K562 (cell line): ENCODE measurements at regions of chr6 and their contacts with region 1.

Region 1: DNA sequence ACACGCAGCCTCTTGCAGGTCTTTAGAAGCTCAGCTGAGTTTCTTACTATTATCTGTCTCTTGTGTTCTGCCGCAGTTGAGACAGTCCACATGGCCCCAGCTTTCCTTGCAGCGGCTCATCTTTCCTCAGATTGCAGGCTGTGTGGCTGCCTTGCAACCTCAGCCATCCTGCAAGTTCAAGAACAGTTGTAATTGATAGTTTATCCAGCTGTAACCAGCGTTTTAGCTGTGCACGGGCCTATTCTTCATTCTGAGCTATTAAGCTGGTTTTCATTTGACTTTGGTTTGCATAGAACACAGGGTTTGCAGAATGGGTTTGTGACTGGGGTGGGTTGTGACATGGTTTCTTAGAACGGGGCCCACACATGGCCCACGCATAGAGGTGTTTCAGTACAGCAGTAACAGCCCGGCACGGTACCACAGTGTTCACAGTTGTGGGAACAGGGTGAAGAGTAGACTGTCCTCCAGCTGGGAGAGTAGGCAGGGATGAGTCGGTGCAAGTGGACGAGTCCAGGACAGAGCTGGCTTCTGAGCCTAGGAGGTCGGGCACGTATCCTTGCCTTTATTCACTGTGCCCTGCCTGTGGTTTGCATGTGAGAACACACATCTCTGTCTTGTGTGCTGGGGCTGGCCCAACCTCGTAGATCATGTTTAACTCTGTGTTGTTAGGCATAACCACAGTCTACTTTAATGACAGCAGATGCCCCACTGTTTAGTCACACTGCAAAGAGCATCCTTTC is 89.2 kb downstream of the RPP40 start:
- DNase-seq: no peak
- ATAC-seq: no peak
- H3K4me3 ChIP-seq: no peak overlapping the region
- H3K27ac ChIP-seq: no peak overlapping the region
- H3K4me1 ChIP-seq: peaks cover 20 to 36% of the 10 kb centered on the region in 2 experiments; a peak in 4 of 5 replicates
- H3K27me3 ChIP-seq: no peaks in the 10 kb centered on the region
- CTCF ChIP-seq: no peak
- EP300 ChIP-seq: no peak
- POLR2A ChIP-seq: no peak
- RAD21 ChIP-seq: no peak

Region 2: DNA sequence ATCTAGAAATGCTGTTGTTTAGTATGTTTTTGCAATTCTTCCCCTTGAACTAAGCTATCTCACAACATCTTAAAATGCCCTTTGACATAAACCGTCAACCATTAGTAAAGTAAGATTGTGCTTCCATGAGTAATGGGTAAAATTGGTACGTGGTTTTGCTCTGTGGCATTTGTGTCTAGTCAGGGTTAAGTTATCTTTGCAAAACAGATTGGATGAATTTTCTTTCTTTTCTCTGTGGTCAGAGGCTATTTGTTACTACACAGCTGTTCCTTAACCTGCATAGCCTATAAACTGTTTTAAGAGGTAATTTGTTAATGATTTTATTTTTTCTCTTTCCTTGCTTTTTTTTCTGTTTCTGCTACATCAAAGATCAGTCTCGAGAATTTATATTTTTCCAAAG is 13.8 kb after region 1 on chr6:
- CTCF ChIA-PET with region 1: no interaction called
- POLR2A ChIA-PET with region 1: interaction called, 10 read pairs
- in situ Hi-C with region 1: no loop called
- intact Hi-C with region 1: no loop called
- DNase-seq: peak; percentile 70 to 82 (median 78)
- ATAC-seq: peak; percentile 91
- H3K4me3 ChIP-seq: no peak overlapping the region
- H3K27ac ChIP-seq: peak overlapping the region; percentile 39; the same call in 1 of the 3 replicates
- H3K4me1 ChIP-seq: peaks cover 9 to 34% of the 10 kb centered on the region in 2 experiments
- H3K27me3 ChIP-seq: no peaks in the 10 kb centered on the region
- CTCF ChIP-seq: no peak
- EP300 ChIP-seq: peak; percentile 96
- POLR2A ChIP-seq: no peak
- RAD21 ChIP-seq: 0 out of 4 replicates have a peak, but pooled peaks of 1 of the 2 experiments have one; percentile 7

Region 3: DNA sequence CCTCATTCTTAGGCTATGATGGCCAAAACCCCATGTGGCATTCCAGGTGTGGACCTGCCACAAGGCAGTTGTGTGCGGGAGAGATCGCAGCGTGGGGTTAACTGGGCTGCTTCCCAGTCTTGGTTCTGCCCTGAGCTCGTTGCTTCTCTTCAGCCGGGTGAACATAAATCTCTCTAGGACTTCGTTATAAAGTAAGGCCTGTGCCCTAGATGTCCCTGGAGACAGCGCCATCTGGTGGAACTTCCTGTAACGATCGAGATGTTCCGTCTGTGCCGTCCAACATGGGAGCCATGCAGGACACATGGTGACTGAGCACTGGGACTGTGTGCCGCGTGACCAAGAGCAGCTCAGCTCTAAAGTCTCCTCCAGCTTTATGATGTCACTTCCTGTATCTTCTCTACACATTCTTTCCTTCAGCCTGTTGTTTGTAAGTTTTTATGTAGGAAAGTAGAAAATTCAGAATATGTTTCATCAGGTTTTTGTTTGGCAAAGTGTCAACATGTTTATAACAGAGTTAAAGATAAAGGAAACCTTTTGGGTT is 116.1 kb after region 1 on chr6:
- CTCF ChIA-PET with region 1: no interaction called
- POLR2A ChIA-PET with region 1: no interaction called
- in situ Hi-C with region 1: no loop called
- intact Hi-C with region 1: no loop called
- DNase-seq: peak; percentile 85 to 95 (median 87)
- ATAC-seq: peak; percentile 97
- H3K4me3 ChIP-seq: no peak overlapping the region
- H3K27ac ChIP-seq: peak overlapping the region; percentile 28; the same call in 1 of the 3 replicates
- H3K4me1 ChIP-seq: peaks cover 7 to 14% of the 10 kb centered on the region in 2 experiments
- H3K27me3 ChIP-seq: 0 out of 5 replicates have a peak, but pooled peaks cover 0 to 2% of the 10 kb centered on the region in 2 experiments
- CTCF ChIP-seq: peak; percentile 84 to 94 (median 93)
- EP300 ChIP-seq: peak; percentile 20; the same call in 1 of the 2 replicates
- POLR2A ChIP-seq: no peak
- RAD21 ChIP-seq: peak; percentile 78 to 94